Panc1 (cell line): ENCODE measurements at regions of chr14 and their contacts with region 1.

Region 1: DNA sequence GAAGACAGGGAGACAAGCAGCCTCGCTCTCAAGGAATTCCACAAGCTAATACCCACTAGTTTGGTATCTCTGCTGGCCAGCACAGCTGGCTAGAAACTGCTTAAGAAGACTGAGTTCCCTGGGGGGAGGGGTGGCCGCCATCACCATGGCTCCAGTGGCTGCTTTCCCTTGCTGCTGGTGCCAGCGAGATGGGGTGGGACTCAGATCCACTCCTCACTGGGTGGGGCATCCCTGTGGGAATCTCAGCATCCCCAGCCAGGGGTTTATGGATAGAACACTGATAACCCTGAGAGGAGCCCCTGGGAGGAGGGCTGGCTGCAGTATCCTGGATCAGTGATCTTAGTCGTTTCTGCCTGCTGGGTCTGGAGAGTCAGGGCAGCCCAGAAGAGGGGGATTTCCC is 170.6 kb upstream of the MDGA2 start:
- DNase-seq: no peak
- ATAC-seq: no peak
- H3K4me3 ChIP-seq: no peak overlapping the region
- H3K27ac ChIP-seq: no peak overlapping the region
- H3K4me1 ChIP-seq: no peaks in the 10 kb centered on the region
- H3K27me3 ChIP-seq: no peaks in the 10 kb centered on the region
- CTCF ChIP-seq: no peak

Region 2: GRCh38 chr14:49447540-49448107 is 1601.6 kb after region 1 on chr14:
- CTCF ChIA-PET with region 1: no interaction called
- POLR2A ChIA-PET with region 1: interaction called, 10 read pairs
- in situ Hi-C with region 1: no loop called
- intact Hi-C with region 1: no loop called
- DNase-seq: no peak
- ATAC-seq: no peak
- H3K4me3 ChIP-seq: no peak overlapping the region
- H3K27ac ChIP-seq: no peak overlapping the region
- H3K4me1 ChIP-seq: no peaks in the 10 kb centered on the region
- H3K27me3 ChIP-seq: no peaks in the 10 kb centered on the region
- CTCF ChIP-seq: no peak